Gastrocnemius medialis (tissue), 4 donors: ENCODE measurements at regions of chr6 and their contacts with region 1.

Region 1: GRCh38 chr6:15691250-15691869 is 28.5 kb upstream of the DTNBP1 start:
- DNase-seq: peak; percentile 80 to 84
- ATAC-seq: peak; percentile 95 to 98
- H3K4me3 ChIP-seq: peak overlapping the region; percentile 55 to 62 (median 56)
- H3K27ac ChIP-seq: peak overlapping the region; percentile 66 to 77 (median 71)
- H3K4me1 ChIP-seq: peaks cover 13% of the 10 kb centered on the region in 2 donors
- H3K27me3 ChIP-seq: no peaks in the 10 kb centered on the region
- CTCF ChIP-seq: peak; percentile 98 to 100 (median 98)
- POLR2A ChIP-seq: no peak

Region 2: DNA sequence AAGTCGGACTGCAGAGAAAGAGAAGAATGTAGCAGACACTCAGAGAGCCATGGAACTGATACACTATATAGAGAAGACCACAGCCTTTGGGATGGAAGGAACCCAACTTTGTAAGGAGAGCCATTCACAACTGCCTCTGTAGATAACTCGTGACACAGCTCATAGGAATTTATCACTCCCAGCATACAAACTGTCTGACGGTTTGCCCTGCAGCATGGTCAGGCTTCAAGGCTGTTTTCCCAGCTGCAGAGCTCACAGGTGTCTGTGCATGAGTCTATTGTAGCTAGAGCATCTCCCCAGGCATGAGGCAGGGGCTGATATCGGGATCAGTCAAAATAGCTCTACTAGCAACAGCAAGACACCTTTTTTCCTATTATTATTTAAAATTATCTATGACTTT is 101.9 kb after region 1 on chr6:
- in situ Hi-C with region 1: no loop called
- intact Hi-C with region 1: loop called (anchors 5 kb)
- DNase-seq: peak; percentile 67 to 75
- ATAC-seq: peak; percentile 94 to 96
- H3K4me3 ChIP-seq: no peak overlapping the region
- H3K27ac ChIP-seq: peak overlapping the region; percentile 65 to 83 (median 78)
- H3K4me1 ChIP-seq: peaks cover 57 to 61% of the 10 kb centered on the region in 2 donors
- H3K27me3 ChIP-seq: no peaks in the 10 kb centered on the region
- CTCF ChIP-seq: no peak
- POLR2A ChIP-seq: no peak

Region 3: GRCh38 chr6:15885624-15886023 is 194.3 kb after region 1 on chr6:
- in situ Hi-C with region 1: no loop called
- intact Hi-C with region 1: loop called (anchors 1 kb)
- DNase-seq: no peak
- ATAC-seq: peak; percentile 63 to 82
- H3K4me3 ChIP-seq: no peak overlapping the region
- H3K27ac ChIP-seq: peak overlapping the region in 3 of 4 donors; percentile 54 to 69 (median 60)
- H3K4me1 ChIP-seq: peaks cover 4 to 22% of the 10 kb centered on the region in 2 donors
- H3K27me3 ChIP-seq: no peaks in the 10 kb centered on the region
- CTCF ChIP-seq: no peak
- POLR2A ChIP-seq: no peak

Region 4: GRCh38 chr6:16168858-16169257 is 477.5 kb after region 1 on chr6:
- in situ Hi-C with region 1: no loop called
- intact Hi-C with region 1: loop called (anchors 5 kb)
- DNase-seq: no peak
- ATAC-seq: no peak
- H3K4me3 ChIP-seq: no peak overlapping the region
- H3K27ac ChIP-seq: no peak overlapping the region
- H3K4me1 ChIP-seq: no peaks in the 10 kb centered on the region
- H3K27me3 ChIP-seq: no peaks in the 10 kb centered on the region
- CTCF ChIP-seq: peak in 3 of 5 experiments; percentile 18 to 60 (median 22)
- POLR2A ChIP-seq: no peak

Region 5: GRCh38 chr6:16183187-16183664 is 491.9 kb after region 1 on chr6:
- in situ Hi-C with region 1: loop called in 3 of 4 experiments (anchors 5 to 10 kb)
- intact Hi-C with region 1: loop called (anchors 1 kb)
- DNase-seq: no peak
- ATAC-seq: peak in 1 of 2 donors; percentile 60
- H3K4me3 ChIP-seq: peak overlapping the region in 1 of 4 donors; percentile 27
- H3K27ac ChIP-seq: peak overlapping the region in 2 of 4 donors; percentile 2 to 38
- H3K4me1 ChIP-seq: peaks cover 4 to 10% of the 10 kb centered on the region in 2 donors
- H3K27me3 ChIP-seq: no peaks in the 10 kb centered on the region
- CTCF ChIP-seq: peak; percentile 61 to 82 (median 70)
- POLR2A ChIP-seq: no peak

Region 6: GRCh38 chr6:16206595-16207037 is 515.3 kb after region 1 on chr6:
- in situ Hi-C with region 1: loop called in 1 of 4 experiments (anchors 10 kb)
- intact Hi-C with region 1: loop called (anchors 1 kb)
- DNase-seq: peak; percentile 23 to 45
- ATAC-seq: peak; percentile 87 to 90
- H3K4me3 ChIP-seq: no peak overlapping the region
- H3K27ac ChIP-seq: no peak overlapping the region
- H3K4me1 ChIP-seq: no peaks in the 10 kb centered on the region
- H3K27me3 ChIP-seq: no peaks in the 10 kb centered on the region
- CTCF ChIP-seq: peak; percentile 90 to 97 (median 93)
- POLR2A ChIP-seq: no peak